Esophagus muscularis mucosa (tissue), 4 donors: ENCODE measurements at regions of chr19 and their contacts with region 1.

Region 1: DNA sequence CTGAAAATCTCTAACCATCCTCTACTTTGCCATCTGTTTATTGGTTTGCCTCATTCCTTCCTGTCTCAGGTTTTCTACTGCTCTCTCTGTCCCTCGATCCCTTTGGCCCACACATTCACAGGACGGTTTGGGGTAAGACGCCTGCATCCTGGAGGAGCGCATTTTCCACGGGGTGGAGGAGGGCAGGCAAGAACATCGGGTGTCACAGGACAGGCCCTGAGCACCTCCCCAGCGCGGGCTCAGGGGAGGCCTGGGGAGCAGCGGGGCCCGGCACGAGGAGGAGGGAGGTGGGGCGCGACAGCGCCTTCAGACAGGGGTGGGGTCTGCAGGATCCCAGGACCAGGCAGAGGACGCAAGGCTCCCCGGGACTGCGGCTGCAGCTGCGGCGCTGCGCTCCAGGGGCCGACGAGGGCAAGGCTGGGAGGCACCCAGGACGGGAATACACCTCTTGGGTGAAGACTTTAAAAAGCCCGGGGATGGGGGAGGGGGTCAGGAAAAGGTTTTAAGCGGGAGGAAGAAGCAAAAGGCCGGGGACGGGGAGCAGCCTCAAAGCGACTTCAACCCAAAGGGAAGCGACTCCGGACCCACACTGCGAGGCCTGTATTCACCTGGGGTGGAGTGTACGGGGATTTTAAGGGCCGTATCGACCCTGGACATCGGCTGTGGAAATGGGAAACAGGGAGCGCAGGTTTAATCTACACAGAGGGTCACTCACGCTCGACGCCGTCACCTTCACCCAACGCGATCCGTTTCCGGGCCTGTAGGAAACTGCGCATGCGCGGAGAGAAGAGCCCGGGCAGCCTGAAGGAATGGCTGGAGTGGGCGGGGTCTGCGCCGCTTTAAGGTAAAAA is at the start of gene ZNF415:
- DNase-seq: no peak
- H3K4me3 ChIP-seq: peak within 1 kb of the TSS; percentile 64 to 79 (median 74)
- H3K27ac ChIP-seq: peak within 1 kb of the TSS; percentile 76 to 84 (median 82)
- H3K4me1 ChIP-seq: peaks cover 10 to 24% (median 21%) of the 10 kb centered on the region in 4 donors
- H3K27me3 ChIP-seq: no peaks in the 10 kb centered on the region
- CTCF ChIP-seq: no peak
- EP300 ChIP-seq: no peak
- POLR2A ChIP-seq: no peak
- total RNA-seq, gene ZNF415: 9.1 to 18.1 (median 13.4) TPM

Region 2: DNA sequence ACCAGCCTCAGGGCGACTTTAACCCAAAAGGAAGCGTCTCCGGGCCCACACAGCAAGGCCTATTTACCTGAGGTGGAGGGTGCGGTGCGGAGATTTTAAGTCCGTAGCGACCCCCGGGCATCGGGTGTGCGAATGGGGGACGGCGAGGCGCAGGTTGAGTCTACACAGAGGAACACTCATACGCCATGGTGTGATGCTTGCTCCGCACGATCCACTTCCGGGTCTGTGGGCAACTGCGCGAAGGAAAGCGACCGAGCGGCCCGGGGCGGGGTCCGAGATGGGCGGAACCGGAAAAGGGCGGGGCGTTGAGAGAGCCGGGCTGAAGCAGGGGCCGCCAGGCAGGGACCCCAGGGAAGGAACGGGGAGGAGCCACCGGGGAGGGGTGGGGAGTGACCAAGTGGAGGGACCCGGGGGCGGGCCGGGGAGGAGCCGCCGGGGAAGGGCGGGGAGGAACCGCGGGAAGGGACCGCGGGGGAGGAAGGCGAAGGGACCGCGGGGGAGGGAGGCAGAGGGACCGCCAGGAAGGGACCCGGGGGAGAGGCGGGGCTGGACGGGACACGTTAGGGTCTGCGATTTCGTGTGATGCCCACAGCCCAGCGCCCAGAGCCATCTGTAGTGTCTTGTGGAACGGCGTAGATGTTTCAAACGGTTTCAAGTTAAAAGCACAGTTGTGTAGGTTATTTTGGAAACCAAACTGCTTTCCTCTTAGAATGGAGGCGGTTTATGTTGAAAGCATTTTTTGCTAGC is 29.0 kb before region 1 on chr19 and contains the start of gene ZNF160:
- intact Hi-C with region 1: loop called (anchors 1 kb)
- DNase-seq: peak; percentile 99
- H3K4me3 ChIP-seq: peak within 1 kb of the TSS; percentile 91 to 93 (median 91)
- H3K27ac ChIP-seq: peak within 1 kb of the TSS; percentile 91 to 97 (median 94)
- H3K4me1 ChIP-seq: peaks cover 24 to 39% (median 32%) of the 10 kb centered on the region in 4 donors
- H3K27me3 ChIP-seq: no peaks in the 10 kb centered on the region
- CTCF ChIP-seq: no peak
- EP300 ChIP-seq: no peak
- POLR2A ChIP-seq: peak; percentile 56
- total RNA-seq, gene ZNF160: 25.3 to 40.3 (median 27.1) TPM